Activated CD4-positive, alpha-beta T cell treated with anti-CD3 and anti-CD28 coated beads for 36 hours (primary cell): ENCODE measurements at regions of chr1 and their contacts with region 1.

Region 1: DNA sequence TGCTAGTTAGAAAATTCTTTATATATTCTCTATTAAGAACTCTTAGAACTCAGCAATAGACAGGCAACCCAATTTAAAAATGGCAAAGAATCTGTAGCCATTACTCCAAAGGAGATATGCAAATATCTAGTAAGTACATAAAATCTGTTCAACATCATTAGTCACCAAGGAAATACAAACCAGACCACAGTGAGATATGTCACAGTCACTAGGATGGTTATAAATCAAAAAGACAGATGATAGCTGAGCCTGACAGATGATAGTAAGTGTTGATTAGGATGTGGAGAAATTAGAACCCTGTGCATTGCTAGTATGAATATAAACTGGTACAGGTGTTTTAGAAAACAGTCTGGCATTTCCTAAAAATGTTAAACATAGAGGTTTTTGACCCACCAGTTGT is 26.6 kb downstream of the SRSF11 start:
- DNase-seq: no peak
- ATAC-seq: peak; percentile 85
- H3K4me3 Mint-ChIP-seq: no peak overlapping the region
- H3K27ac Mint-ChIP-seq: peak overlapping the region; percentile 4
- H3K4me1 Mint-ChIP-seq: peaks cover 22% of the 10 kb centered on the region
- H3K27me3 Mint-ChIP-seq: no peaks in the 10 kb centered on the region

Region 2: DNA sequence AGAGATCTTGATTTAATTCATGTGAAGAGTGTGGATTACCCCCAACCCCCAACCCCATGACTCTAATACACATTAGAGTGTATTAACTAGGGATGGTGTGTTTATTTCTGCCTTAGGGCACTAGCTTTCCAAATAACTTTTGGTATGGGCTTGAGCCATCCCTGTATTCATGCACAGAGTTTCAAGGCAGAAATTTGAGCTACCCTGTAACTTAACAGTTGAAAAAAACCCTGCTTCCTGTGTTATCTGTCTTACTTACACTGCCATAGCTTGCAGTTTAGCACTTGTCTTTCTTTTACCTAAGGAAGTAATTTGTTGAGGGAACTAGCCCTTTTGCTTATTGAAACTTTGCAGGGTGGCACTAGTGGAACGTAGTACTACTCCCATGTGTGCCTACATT is 20.3 kb before region 1 on chr1:
- CTCF ChIA-PET with region 1: interaction called, 3 read pairs
- POLR2A ChIA-PET with region 1: no interaction called
- intact Hi-C with region 1: loop called in 1 of 2 experiments (anchors 1 kb)
- DNase-seq: no peak
- ATAC-seq: no peak
- H3K4me3 Mint-ChIP-seq: no peak overlapping the region
- H3K27ac Mint-ChIP-seq: peak overlapping the region; percentile 47
- H3K4me1 Mint-ChIP-seq: peaks cover 40% of the 10 kb centered on the region
- H3K27me3 Mint-ChIP-seq: no peaks in the 10 kb centered on the region

Region 3: GRCh38 chr1:70556541-70556940 is 308.8 kb after region 1 on chr1:
- CTCF ChIA-PET with region 1: no interaction called
- POLR2A ChIA-PET with region 1: no interaction called
- intact Hi-C with region 1: no loop called
- DNase-seq: no peak
- ATAC-seq: no peak
- H3K4me3 Mint-ChIP-seq: no peak overlapping the region
- H3K27ac Mint-ChIP-seq: no peak overlapping the region
- H3K4me1 Mint-ChIP-seq: no peaks in the 10 kb centered on the region
- H3K27me3 Mint-ChIP-seq: no peaks in the 10 kb centered on the region